Panc1 (cell line): ENCODE measurements at regions of chr6 and their contacts with region 1.

Region 1: GRCh38 chr6:43013843-43014433 is at the starts of genes KLHDC3 and MEA1:
- DNase-seq: peak; percentile 99
- ATAC-seq: peak; percentile 97
- H3K4me3 ChIP-seq: peak within 1 kb of the TSS; percentile 87 to 95
- H3K27ac ChIP-seq: peak within 1 kb of the TSS; percentile 94
- H3K4me1 ChIP-seq: peaks cover 20% of the 10 kb centered on the region
- H3K27me3 ChIP-seq: no peaks in the 10 kb centered on the region
- CTCF ChIP-seq: no peak
- total RNA-seq, gene KLHDC3: 60.9 TPM
- total RNA-seq, gene MEA1: 111 TPM

Region 2: DNA sequence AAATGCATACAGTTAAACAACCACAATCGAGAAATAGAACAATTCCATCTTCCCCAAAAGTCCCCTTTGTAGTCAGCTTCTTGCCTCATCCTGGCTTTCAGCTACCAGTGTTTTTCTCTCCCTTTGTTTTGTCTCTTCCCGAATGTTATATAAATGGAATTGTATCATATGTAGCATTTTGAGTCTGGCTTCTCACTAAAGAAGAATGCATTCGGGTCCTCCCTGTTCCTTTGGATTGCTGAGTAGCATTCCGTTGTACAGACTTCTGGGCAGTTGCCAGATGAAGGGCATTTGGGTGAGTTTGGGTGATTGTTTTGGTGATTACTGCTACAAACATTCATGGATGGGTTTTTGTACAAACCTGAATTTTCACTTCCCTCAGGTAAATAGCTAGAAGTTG is 319.4 kb before region 1 on chr6:
- CTCF ChIA-PET with region 1: no interaction called
- POLR2A ChIA-PET with region 1: interaction called, 10 read pairs
- in situ Hi-C with region 1: no loop called
- intact Hi-C with region 1: no loop called
- DNase-seq: no peak
- ATAC-seq: no peak
- H3K4me3 ChIP-seq: no peak overlapping the region
- H3K27ac ChIP-seq: no peak overlapping the region
- H3K4me1 ChIP-seq: no peaks in the 10 kb centered on the region
- H3K27me3 ChIP-seq: no peaks in the 10 kb centered on the region
- CTCF ChIP-seq: no peak

Region 3: DNA sequence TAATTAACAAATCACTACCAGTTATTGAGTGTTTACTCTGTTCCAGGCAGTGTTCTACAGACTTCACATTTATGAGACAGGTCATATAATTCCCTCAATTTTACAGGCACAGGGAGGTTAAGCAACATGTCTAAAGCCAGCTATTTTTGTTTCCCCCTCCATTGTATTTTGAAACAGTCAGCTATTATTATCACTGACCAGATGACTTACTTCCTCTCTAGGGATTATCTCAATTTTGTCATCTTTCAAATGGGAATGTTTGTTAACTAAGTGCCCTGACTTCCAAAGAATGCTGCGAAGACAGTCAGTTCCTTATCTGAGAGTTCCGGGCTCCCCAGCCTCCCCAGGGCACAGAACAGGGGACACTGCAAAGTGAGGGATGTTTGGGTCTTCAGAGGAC is 90.3 kb before region 1 on chr6:
- CTCF ChIA-PET with region 1: no interaction called
- POLR2A ChIA-PET with region 1: no interaction called
- in situ Hi-C with region 1: no loop called
- intact Hi-C with region 1: no loop called
- DNase-seq: no peak
- ATAC-seq: no peak
- H3K4me3 ChIP-seq: no peak overlapping the region
- H3K27ac ChIP-seq: no peak overlapping the region
- H3K4me1 ChIP-seq: peaks cover 9% of the 10 kb centered on the region; the same call in 1 of the 2 replicates
- H3K27me3 ChIP-seq: no peaks in the 10 kb centered on the region
- CTCF ChIP-seq: no peak

Region 4: GRCh38 chr6:43035495-43036194 is 21.7 kb after region 1 on chr6:
- CTCF ChIA-PET with region 1: no interaction called
- POLR2A ChIA-PET with region 1: no interaction called
- in situ Hi-C with region 1: no loop called
- intact Hi-C with region 1: no loop called
- DNase-seq: no peak
- ATAC-seq: peak; percentile 23; the same call in 1 of the 2 replicates
- H3K4me3 ChIP-seq: no peak overlapping the region
- H3K27ac ChIP-seq: no peak overlapping the region
- H3K4me1 ChIP-seq: peaks cover 3% of the 10 kb centered on the region; the same call in 1 of the 2 replicates
- H3K27me3 ChIP-seq: no peaks in the 10 kb centered on the region
- CTCF ChIP-seq: no peak

Region 5: GRCh38 chr6:43105538-43106220 is 91.7 kb after region 1 on chr6:
- CTCF ChIA-PET with region 1: no interaction called
- POLR2A ChIA-PET with region 1: no interaction called
- in situ Hi-C with region 1: no loop called
- intact Hi-C with region 1: no loop called
- DNase-seq: no peak
- ATAC-seq: 0 out of 2 replicates have a peak, but pooled peaks have one; percentile 28
- H3K4me3 ChIP-seq: no peak overlapping the region
- H3K27ac ChIP-seq: no peak overlapping the region
- H3K4me1 ChIP-seq: peaks cover 20% of the 10 kb centered on the region
- H3K27me3 ChIP-seq: no peaks in the 10 kb centered on the region
- CTCF ChIP-seq: no peak

Region 6: DNA sequence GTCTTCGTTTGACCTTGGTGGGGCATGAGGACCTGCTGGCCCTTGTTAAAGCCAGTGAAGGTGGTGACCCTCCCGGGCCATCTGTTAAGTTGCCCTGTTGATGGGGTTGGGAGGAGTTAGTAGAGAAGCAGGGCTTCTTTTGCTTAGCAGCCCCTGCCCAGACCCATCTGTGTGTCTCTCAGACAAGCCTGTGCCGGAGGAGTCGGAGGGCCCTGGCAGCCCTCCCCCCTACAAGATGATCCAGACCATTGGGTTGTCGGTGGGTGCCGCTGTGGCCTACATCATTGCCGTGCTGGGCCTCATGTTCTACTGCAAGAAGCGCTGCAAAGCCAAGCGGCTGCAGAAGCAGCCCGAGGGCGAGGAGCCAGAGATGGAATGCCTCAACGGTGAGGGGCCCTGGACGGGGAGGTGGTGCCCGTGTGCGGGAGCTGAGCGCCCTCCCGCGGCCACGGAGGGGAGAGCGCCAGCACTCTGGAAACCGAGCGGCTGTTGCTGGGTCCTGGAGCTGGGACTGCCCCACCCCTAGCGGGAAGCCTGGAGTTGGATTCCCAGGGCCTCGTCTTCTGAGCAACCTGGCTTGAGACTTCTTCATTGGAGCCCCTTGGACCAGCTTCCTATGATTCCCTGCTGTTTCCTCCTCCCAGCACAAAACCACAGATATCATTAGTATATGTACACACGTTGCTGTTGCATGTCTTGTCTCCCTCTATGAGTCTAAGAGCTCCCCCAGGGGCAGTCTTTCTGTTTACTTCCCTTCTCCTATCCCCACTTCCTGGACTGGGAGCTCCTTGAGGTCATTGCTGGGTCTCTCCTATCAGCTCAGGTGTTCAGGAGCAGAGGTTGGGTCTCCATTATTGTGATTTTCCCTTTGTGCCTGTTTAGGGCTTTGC is 129.5 kb after region 1 on chr6:
- CTCF ChIA-PET with region 1: no interaction called
- POLR2A ChIA-PET with region 1: interaction called, 21 read pairs
- in situ Hi-C with region 1: no loop called
- intact Hi-C with region 1: no loop called
- DNase-seq: no peak
- ATAC-seq: peak; percentile 97
- H3K4me3 ChIP-seq: no peak overlapping the region
- H3K27ac ChIP-seq: peak overlapping the region; percentile 60
- H3K4me1 ChIP-seq: peaks cover 17% of the 10 kb centered on the region
- H3K27me3 ChIP-seq: no peaks in the 10 kb centered on the region
- CTCF ChIP-seq: peak; percentile 97